Endothelial cell of umbilical vein (primary cell): ENCODE measurements at regions of chr4 and their contacts with region 1.

Region 1: DNA sequence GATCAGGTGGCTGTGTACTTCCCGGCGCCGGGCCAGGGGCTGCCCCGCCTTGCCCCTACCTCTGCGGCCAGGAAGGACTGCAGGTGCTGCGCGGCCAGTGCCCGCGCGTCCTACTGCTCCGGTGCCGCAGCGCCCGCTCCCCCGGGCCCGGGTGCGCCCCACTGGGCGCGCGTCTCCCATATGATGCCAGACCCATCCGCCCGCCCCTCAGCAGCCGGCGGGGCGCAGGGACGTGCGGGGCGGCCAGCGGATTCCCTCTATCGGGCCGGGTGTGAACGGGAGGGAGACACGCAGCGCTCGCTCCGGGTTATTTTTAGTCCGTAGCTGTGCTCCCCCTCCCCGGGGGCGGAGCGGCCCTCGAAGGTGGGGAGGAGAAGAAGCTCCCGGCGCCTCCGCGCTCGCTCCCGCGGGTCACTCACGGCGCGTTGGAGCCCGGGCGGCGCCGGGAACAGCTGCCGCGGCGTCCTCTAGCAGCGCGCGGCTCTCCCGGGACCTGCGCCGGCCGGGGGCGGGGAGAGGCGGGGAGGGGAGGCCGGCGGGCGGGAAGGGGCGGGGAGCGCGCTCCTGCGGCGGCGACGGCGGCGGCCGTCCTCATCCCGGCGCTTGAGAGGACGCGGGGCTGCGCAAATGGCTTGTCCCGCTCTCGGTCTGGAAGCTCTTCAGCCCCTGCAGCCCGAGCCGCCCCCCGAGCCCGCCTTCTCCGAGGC is 103.6 kb downstream of the UCHL1 start:
- DNase-seq: peak; percentile 70
- H3K4me3 ChIP-seq: peak overlapping the region; percentile 28 to 76 (median 40)
- H3K27ac ChIP-seq: no peak overlapping the region
- H3K4me1 ChIP-seq: peaks cover 3% of the 10 kb centered on the region
- H3K27me3 ChIP-seq: peaks cover 7 to 52% of the 10 kb centered on the region in 2 experiments
- CTCF ChIP-seq: no peak
- POLR2A ChIP-seq: no peak

Region 2: GRCh38 chr4:41339812-41340809 is 20.3 kb before region 1 on chr4:
- CTCF ChIA-PET with region 1: interaction called, 11 read pairs
- POLR2A ChIA-PET with region 1: no interaction called
- dilution Hi-C with region 1: no loop called
- intact Hi-C with region 1: no loop called
- DNase-seq: peak; percentile 85
- H3K4me3 ChIP-seq: no peak overlapping the region
- H3K27ac ChIP-seq: no peak overlapping the region
- H3K4me1 ChIP-seq: no peaks in the 10 kb centered on the region
- H3K27me3 ChIP-seq: no peaks in the 10 kb centered on the region
- CTCF ChIP-seq: peak in 1 of 2 donors; percentile 17
- POLR2A ChIP-seq: no peak

Region 3: DNA sequence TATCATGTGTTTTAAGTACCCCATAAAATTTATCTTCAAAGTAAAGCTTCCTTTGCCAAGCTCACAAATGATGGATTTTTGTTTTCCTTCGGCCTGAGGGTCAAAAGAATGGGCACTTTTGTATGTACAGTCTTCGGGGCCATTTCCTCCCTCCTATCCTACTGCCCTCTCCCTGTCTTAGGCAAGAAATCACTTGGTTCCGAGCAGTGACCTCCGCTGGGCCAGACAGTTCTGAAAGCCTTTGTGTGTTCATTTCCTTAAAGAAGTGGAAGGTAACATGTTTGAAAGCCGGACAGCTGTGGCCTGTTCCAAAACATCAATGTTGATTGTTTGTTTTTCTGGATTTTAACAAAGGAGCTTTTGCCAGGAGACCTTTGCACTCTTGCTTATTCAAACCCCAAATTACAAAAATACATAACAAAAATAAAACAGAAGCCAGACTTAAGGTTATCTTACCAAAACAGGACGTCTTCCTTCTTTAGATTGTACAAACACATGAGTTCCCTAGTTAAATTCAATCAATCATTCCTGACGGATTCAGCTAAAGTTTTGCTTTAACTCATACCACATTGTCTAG is 67.0 kb after region 1 on chr4:
- CTCF ChIA-PET with region 1: no interaction called
- POLR2A ChIA-PET with region 1: interaction called, 3 read pairs
- dilution Hi-C with region 1: no loop called
- intact Hi-C with region 1: loop called (anchors 2 kb)
- DNase-seq: peak; percentile 98
- H3K4me3 ChIP-seq: no peak overlapping the region
- H3K27ac ChIP-seq: peak overlapping the region; percentile 40
- H3K4me1 ChIP-seq: peaks cover 37% of the 10 kb centered on the region
- H3K27me3 ChIP-seq: peaks cover 17 to 42% of the 10 kb centered on the region in 2 experiments
- CTCF ChIP-seq: no peak
- POLR2A ChIP-seq: no peak

Region 4: GRCh38 chr4:41661442-41662076 is 301.2 kb after region 1 on chr4:
- CTCF ChIA-PET with region 1: interaction called, 13 read pairs
- POLR2A ChIA-PET with region 1: no interaction called
- dilution Hi-C with region 1: no loop called
- intact Hi-C with region 1: no loop called
- DNase-seq: peak; percentile 69
- H3K4me3 ChIP-seq: no peak overlapping the region
- H3K27ac ChIP-seq: no peak overlapping the region
- H3K4me1 ChIP-seq: no peaks in the 10 kb centered on the region
- H3K27me3 ChIP-seq: peaks cover 2 to 12% of the 10 kb centered on the region in 2 experiments
- CTCF ChIP-seq: peak; percentile 82 to 87
- POLR2A ChIP-seq: no peak